PC-9 (cell line): ENCODE measurements at regions of chr7 and their contacts with region 1.

Region 1: GRCh38 chr7:87152107-87152844 is at the start of gene DMTF1:
- DNase-seq: peak; percentile 85 to 92
- H3K4me3 ChIP-seq: peak within 1 kb of the TSS; percentile 78
- H3K27ac ChIP-seq: peak within 1 kb of the TSS; percentile 86
- H3K4me1 ChIP-seq: peaks cover 27% of the 10 kb centered on the region
- H3K27me3 ChIP-seq: no peaks in the 10 kb centered on the region
- CTCF ChIP-seq: no peak
- total RNA-seq, gene DMTF1: 54.0 and 75.3 TPM in 2 replicates

Region 2: GRCh38 chr7:86926732-86927131 is 225.5 kb before region 1 on chr7:
- CTCF ChIA-PET with region 1: interaction called, 3 read pairs
- POLR2A ChIA-PET with region 1: no interaction called
- intact Hi-C with region 1: loop called (anchors 1 kb)
- DNase-seq: peak in 1 of 2 experiments; percentile 28
- H3K4me3 ChIP-seq: no peak overlapping the region
- H3K27ac ChIP-seq: no peak overlapping the region
- H3K4me1 ChIP-seq: no peaks in the 10 kb centered on the region
- H3K27me3 ChIP-seq: no peaks in the 10 kb centered on the region
- CTCF ChIP-seq: peak; percentile 78

Region 3: DNA sequence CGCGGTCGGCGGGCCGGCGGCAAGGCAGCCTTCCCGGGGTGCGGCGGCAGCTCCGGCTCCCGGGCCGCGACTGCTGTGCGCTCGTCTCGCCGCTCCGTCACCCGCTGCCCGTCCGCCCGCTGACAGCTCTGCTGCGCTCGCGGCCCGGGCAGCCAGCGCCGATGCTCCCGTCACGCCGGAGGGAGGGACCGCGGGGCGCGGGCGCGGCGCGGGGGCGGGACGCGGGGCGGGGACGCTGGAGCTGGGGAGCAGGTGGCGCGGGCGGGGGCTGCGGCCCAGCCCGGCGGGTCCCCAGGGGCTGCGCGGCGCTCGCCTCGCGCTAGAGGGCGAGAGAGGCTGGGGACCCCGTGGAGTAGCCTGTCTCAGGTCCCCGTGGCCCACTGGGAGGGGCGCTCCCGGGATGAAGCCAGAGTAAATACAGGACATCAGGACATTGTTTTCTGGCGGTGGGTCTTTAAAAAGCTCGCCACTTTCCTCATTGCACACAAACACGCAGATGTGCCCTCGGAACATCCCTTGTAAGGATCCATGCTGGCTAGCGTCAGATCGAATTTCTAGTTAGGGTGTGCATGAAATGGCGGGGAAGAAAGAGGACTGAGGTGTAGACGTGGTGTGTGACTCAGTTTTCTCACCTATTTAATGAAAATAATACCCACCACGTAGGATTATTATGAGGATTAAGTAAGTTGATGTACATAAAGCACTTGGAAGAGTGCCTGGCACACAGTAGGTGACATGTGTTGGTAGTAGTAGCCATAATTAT is 92.6 kb before region 1 on chr7 and contains the start of gene ELAPOR2:
- CTCF ChIA-PET with region 1: interaction called, 7 read pairs
- POLR2A ChIA-PET with region 1: no interaction called
- intact Hi-C with region 1: loop called (anchors 5 kb)
- DNase-seq: peak in 1 of 2 experiments; percentile 84
- H3K4me3 ChIP-seq: peak within 1 kb of the TSS; percentile 69; the same call in 1 of the 2 replicates
- H3K27ac ChIP-seq: no peak within 1 kb of the TSS
- H3K4me1 ChIP-seq: peaks cover 5% of the 10 kb centered on the region; the same call in 1 of the 2 replicates
- H3K27me3 ChIP-seq: no peaks in the 10 kb centered on the region
- CTCF ChIP-seq: peak; percentile 43
- total RNA-seq, gene ELAPOR2: 10.1 and 11.0 TPM in 2 replicates

Region 4: GRCh38 chr7:87140271-87140748 is 12.0 kb before region 1 on chr7:
- CTCF ChIA-PET with region 1: no interaction called
- POLR2A ChIA-PET with region 1: no interaction called
- intact Hi-C with region 1: no loop called
- DNase-seq: no peak
- H3K4me3 ChIP-seq: no peak overlapping the region
- H3K27ac ChIP-seq: no peak overlapping the region
- H3K4me1 ChIP-seq: 0 out of 2 replicates have a peak, but pooled peaks cover 8% of the 10 kb centered on the region
- H3K27me3 ChIP-seq: no peaks in the 10 kb centered on the region
- CTCF ChIP-seq: no peak

Region 5: GRCh38 chr7:87173471-87173870 is 21.2 kb after region 1 on chr7:
- CTCF ChIA-PET with region 1: no interaction called
- POLR2A ChIA-PET with region 1: interaction called, 23 read pairs
- intact Hi-C with region 1: no loop called
- DNase-seq: no peak
- H3K4me3 ChIP-seq: no peak overlapping the region
- H3K27ac ChIP-seq: no peak overlapping the region
- H3K4me1 ChIP-seq: no peaks in the 10 kb centered on the region
- H3K27me3 ChIP-seq: no peaks in the 10 kb centered on the region
- CTCF ChIP-seq: no peak

Region 6: DNA sequence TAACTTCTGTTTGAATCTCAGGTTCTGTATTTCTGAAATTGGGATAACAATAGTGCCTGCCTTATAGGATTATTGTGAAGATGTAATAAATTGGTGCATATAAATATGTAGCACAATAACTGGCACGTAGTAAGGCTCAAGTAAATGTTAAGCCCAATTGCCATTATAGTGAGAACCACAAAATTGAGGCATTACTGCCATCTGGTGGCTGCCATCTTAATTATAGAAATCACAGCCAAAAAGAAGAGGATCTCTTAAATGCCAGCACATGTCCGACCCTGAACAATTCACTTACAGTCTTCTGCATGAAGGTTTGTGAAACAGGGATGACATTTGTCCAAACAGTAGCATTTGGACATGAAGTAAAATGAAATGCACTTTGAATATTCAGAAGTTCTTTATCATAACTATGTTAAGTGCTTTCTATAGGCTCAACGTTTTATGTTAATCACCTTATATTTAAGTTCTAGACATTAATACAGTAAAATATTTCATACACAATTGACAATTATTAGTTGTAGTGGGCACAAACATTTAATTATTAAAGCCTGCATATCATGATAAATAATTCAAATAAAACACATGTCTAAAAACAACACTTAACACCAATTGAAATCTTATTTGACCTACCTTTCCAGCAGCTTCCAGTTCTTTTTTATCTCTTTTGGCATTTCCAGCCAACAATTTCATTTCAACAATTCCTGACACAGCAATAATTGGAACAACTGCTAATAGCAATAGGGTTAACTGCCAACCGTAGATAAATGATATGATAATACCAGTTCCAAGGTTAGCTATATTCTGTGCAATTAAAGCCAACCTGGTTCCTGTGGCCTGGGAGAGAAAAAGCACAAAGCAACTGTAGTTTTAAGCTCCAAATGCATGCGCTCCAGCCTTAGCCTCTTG is 264.7 kb after region 1 on chr7:
- CTCF ChIA-PET with region 1: no interaction called
- POLR2A ChIA-PET with region 1: no interaction called
- intact Hi-C with region 1: loop called (anchors 10 kb)
- DNase-seq: peak in 1 of 2 experiments; percentile 55
- H3K4me3 ChIP-seq: no peak overlapping the region
- H3K27ac ChIP-seq: no peak overlapping the region
- H3K4me1 ChIP-seq: no peaks in the 10 kb centered on the region
- H3K27me3 ChIP-seq: no peaks in the 10 kb centered on the region
- CTCF ChIP-seq: peak; percentile 84

Region 7: GRCh38 chr7:87624628-87625027 is 472.4 kb after region 1 on chr7:
- CTCF ChIA-PET with region 1: no interaction called
- POLR2A ChIA-PET with region 1: no interaction called
- intact Hi-C with region 1: no loop called
- DNase-seq: no peak
- H3K4me3 ChIP-seq: no peak overlapping the region
- H3K27ac ChIP-seq: no peak overlapping the region
- H3K4me1 ChIP-seq: no peaks in the 10 kb centered on the region
- H3K27me3 ChIP-seq: no peaks in the 10 kb centered on the region
- CTCF ChIP-seq: 0 out of 2 replicates have a peak, but pooled peaks have one; percentile 23